GM18951 (cell line): ENCODE measurements at regions of chr7 and their contacts with region 1.

Region 1: DNA sequence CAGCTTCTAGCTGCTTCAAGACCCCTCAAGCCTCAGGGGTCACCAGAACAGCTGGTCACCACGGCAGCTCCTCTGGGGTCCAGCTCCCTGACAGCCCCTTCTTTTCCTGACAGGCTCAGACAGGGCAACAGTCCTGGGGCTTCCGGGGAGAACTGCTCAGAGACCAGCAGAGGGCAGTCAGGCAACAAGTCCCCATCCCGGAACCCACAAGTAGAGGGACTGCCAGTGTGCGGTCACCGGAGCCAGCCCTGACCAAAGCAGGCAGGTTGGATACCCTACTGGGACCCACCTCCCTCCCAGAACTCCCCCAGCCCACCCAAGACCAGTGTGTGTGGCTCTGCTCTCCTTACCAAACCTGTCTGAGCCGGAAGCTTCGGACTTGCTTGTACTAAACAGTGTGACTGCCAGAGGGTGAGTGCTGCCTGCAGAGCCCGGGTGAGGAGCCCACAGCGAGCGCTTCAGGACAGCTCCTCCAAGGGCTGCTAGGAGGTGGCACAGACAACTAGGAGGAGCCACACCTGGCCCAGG is 40.3 kb downstream of the YKT6 start:
- POLR2A ChIP-seq: no peak

Region 2: DNA sequence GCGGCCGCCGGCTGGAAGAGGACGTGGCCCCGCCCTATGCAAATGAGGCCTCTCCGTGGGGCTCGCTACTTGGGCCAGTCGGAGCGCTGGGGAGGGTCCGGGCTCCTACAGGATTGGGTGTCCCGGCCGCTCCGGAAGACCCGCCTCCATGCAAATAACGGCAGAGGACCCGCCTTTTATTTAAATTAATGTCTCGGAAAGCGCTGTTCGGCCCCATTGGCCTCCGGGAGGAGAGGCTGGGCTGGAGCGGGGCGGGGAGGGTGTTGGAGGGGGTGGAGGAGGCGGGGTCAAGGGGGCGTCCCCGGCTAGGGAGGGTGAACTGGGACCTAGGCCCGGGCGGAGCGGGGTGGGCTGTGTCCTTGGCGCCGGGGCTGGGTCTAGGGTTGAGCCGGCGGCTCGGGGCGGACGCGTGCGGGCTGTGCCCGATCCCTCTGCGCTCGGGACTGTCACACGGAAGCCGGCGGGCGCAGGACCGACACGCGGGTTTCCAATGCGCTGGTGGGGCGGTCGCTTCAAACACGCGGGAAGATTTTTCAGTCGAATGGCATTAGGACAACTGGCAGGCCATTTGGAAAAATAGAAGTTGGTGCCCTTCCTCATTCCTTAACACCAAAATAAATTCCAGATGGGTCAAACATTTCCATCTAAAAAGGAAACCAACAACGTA is 158.4 kb before region 1 on chr7:
- in situ Hi-C with region 1: no loop called
- POLR2A ChIP-seq: peak; percentile 58

Region 3: DNA sequence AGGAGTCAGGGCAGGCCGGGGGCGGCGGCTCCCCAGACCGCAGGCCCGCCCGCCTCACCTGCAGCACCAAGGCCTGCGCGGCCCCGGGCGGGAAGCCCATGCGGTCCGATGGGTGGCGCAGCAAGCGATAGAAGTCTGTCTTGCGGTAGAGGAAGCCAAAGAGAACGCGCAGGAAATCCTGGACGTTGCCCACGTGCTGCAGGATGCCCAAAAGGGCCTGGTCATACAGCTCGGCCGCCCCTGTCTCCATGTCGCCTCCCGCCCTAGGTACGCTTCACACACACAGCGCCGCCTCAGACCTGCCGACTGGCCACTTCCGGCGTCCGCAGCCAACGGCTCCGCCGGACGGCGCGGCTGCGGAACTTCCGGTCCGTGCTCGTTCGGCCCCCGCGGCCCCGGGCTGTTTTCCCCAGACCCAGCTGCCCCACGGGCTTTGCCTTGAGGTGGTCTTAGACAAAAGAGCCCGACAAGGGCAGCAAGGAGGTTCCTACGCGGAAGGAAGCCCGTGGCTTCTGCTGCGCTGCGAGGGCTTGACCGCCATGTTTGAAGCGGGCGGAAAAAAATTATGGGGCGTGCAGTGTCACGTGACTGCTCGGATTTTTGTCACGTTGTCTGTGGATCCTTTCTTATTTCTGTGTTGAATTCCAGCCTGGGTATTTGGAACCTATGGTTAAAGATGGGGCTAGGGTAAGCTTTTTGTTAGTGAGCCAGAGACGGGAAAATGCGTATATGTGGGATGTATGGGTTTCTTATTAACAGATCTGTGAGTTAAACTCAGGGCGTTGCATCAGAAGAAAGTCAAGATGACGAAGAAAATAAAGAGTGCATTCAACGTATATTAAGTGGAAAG is 249.5 kb after region 1 on chr7 and contains the start of gene NUDCD3:
- in situ Hi-C with region 1: loop called (anchors 25 kb)
- POLR2A ChIP-seq: peak; percentile 80

Region 4: GRCh38 chr7:44541028-44541869 is 300.2 kb after region 1 on chr7 and contains the start of gene NPC1L1:
- in situ Hi-C with region 1: no loop called
- POLR2A ChIP-seq: no peak